Kidney (tissue), 22 donors: ENCODE measurements at regions of chr4 and their contacts with region 1.

Region 1: DNA sequence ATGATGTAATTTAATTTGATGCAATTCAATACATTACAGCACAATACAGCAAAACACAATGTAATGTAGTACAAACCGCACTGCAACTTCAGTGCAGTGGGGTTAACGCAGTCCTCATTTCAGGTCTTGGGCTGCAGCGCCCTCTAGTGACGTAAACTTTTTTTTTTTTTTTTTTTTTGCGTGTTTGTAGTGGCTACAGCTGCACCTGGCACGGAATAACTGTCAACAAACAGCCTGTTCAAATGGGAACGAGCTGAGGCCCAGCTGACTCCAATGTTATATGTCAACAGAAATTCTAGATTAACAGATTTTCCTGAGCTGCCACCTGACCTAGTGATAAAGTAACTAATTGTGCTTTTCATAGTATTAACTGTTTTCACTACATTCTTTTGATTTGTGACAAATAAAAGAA is 33.5 kb upstream of the RASSF6 start:
- DNase-seq: peak in 3 of 5 donors; percentile 54 to 77 (median 63)
- H3K4me3 ChIP-seq: no peak overlapping the region
- H3K27ac ChIP-seq: no peak overlapping the region
- H3K4me1 ChIP-seq: no peaks in the 10 kb centered on the region
- H3K27me3 ChIP-seq: no peaks in the 10 kb centered on the region
- CTCF ChIP-seq: peak; percentile 60

Region 2: GRCh38 chr4:74123065-74123728 is 469.5 kb after region 1 on chr4:
- intact Hi-C with region 1: loop called (anchors 10 kb)
- DNase-seq: no peak
- H3K4me3 ChIP-seq: no peak overlapping the region
- H3K27ac ChIP-seq: no peak overlapping the region
- H3K4me1 ChIP-seq: no peaks in the 10 kb centered on the region
- H3K27me3 ChIP-seq: no peaks in the 10 kb centered on the region
- CTCF ChIP-seq: no peak